ENCODE measurements at regions of chr6 and their contacts with region 1.

Region 1: DNA sequence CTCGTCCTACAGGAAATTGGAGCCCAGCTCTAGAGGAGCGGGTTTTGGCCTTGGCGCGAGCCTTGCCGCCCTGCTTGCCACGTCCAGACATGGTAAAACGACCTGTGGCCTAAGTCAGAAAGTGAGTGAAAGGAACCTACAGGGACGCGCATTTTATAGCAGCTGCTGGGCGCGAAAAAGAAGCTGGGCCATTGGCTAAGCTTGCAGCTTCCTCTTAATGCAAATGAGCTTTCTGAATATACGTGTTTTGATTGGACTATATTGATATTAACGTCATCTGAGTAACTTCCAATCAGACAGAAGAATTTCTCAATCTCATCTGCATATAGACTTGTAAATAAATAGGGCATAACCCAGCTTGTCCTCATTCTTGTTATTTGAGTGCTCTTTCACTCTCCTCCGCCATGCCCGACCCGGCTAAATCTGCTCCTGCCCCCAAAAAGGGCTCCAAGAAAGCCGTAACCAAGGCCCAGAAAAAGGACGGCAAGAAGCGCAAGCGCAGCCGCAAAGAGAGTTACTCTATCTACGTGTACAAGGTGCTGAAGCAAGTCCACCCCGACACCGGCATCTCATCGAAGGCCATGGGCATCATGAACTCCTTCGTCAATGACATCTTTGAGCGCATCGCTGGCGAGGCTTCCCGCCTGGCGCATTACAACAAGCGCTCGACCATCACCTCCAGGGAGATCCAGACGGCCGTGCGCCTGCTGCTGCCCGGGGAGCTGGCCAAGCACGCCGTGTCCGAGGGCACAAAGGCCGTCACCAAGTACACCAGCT is 18.9 kb downstream of the OR2B2 start:
- DNase-seq: peak; percentile 95
- H3K4me3 Mint-ChIP-seq: no peak overlapping the region
- H3K27ac Mint-ChIP-seq: no peak overlapping the region
- H3K4me1 Mint-ChIP-seq: peaks cover 32% of the 10 kb centered on the region
- H3K27me3 Mint-ChIP-seq: peaks cover 7% of the 10 kb centered on the region

Region 2: DNA sequence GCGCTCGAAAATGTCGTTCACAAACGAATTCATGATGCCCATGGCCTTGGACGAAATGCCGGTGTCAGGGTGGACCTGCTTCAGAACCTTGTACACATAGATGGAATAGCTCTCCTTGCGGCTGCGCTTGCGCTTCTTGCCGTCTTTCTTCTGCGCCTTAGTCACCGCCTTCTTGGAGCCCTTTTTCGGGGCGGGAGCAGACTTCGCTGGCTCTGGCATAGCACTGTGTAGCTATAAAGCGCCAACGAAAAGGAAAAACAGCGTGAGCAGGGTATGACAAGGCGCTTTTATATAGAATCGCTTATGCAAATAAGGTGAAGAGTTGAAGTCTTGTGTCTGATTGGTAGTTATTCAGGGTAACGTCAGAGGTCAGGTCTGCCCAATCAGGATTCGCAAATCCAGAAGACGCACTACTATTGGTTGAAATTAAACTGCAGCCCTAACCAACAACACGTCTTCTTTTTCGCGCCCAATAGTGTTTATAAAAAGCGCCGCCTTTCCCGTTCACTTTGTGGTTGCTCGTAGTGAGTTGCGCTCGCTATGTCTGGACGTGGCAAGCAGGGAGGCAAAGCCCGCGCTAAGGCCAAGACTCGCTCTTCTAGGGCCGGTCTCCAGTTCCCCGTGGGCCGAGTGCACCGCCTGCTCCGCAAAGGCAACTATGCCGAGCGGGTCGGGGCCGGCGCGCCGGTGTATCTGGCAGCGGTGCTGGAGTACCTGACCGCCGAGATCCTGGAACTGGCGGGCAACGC is 760.5 kb before region 1 on chr6:
- CTCF ChIA-PET with region 1: no interaction called
- POLR2A ChIA-PET with region 1: interaction called, 42 read pairs
- intact Hi-C with region 1: loop called (anchors 2 kb)
- DNase-seq: peak; percentile 95
- H3K4me3 Mint-ChIP-seq: no peak overlapping the region
- H3K27ac Mint-ChIP-seq: no peak overlapping the region
- H3K4me1 Mint-ChIP-seq: peaks cover 16% of the 10 kb centered on the region
- H3K27me3 Mint-ChIP-seq: peaks cover 2% of the 10 kb centered on the region

Region 3: GRCh38 chr6:27479319-27480182 is 413.7 kb before region 1 on chr6:
- CTCF ChIA-PET with region 1: no interaction called
- POLR2A ChIA-PET with region 1: no interaction called
- intact Hi-C with region 1: loop called (anchors 2 kb)
- DNase-seq: peak; percentile 89
- H3K4me3 Mint-ChIP-seq: no peak overlapping the region
- H3K27ac Mint-ChIP-seq: no peak overlapping the region
- H3K4me1 Mint-ChIP-seq: peaks cover 5% of the 10 kb centered on the region
- H3K27me3 Mint-ChIP-seq: no peaks in the 10 kb centered on the region

Region 4: GRCh38 chr6:27650620-27651370 is 242.5 kb before region 1 on chr6:
- CTCF ChIA-PET with region 1: no interaction called
- POLR2A ChIA-PET with region 1: no interaction called
- intact Hi-C with region 1: no loop called
- DNase-seq: peak; percentile 74
- H3K4me3 Mint-ChIP-seq: no peak overlapping the region
- H3K27ac Mint-ChIP-seq: no peak overlapping the region
- H3K4me1 Mint-ChIP-seq: peaks cover 5% of the 10 kb centered on the region
- H3K27me3 Mint-ChIP-seq: peaks cover 50% of the 10 kb centered on the region

Region 5: DNA sequence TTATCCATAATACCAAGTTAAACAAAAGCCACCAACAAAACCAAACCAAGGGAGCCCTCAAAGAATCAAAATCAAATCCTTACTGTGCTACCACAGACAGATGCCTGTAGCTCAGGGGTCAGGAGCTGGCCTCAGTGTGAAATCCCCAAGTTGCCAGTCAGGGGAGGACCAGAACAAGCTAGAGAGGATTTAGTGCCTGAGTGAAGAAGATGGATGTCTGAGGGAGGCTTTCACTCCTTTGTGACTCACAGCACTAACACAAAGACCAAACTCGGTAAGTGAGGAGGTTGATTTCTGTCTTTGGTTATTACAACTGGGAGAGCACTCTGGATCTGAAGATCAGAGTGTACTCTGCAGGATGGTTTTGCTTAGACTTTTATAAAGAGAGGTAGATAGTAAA is 230.5 kb before region 1 on chr6:
- CTCF ChIA-PET with region 1: no interaction called
- POLR2A ChIA-PET with region 1: no interaction called
- intact Hi-C with region 1: no loop called
- DNase-seq: no peak
- H3K4me3 Mint-ChIP-seq: no peak overlapping the region
- H3K27ac Mint-ChIP-seq: no peak overlapping the region
- H3K4me1 Mint-ChIP-seq: peaks cover 5% of the 10 kb centered on the region
- H3K27me3 Mint-ChIP-seq: peaks cover 44% of the 10 kb centered on the region

Region 6: GRCh38 chr6:27795697-27796494 is 97.4 kb before region 1 on chr6:
- CTCF ChIA-PET with region 1: interaction called, 64 read pairs
- POLR2A ChIA-PET with region 1: no interaction called
- intact Hi-C with region 1: no loop called
- DNase-seq: peak; percentile 39
- H3K4me3 Mint-ChIP-seq: no peak overlapping the region
- H3K27ac Mint-ChIP-seq: peak overlapping the region; percentile 67
- H3K4me1 Mint-ChIP-seq: peaks cover 22% of the 10 kb centered on the region
- H3K27me3 Mint-ChIP-seq: peaks cover 8% of the 10 kb centered on the region

Region 7: GRCh38 chr6:27864906-27865849 is 28.1 kb before region 1 on chr6:
- CTCF ChIA-PET with region 1: interaction called, 121 read pairs
- POLR2A ChIA-PET with region 1: interaction called, 507 read pairs
- intact Hi-C with region 1: loop called (anchors 1 kb)
- DNase-seq: peak; percentile 85
- H3K4me3 Mint-ChIP-seq: peak overlapping the region; percentile 96
- H3K27ac Mint-ChIP-seq: peak overlapping the region; percentile 100
- H3K4me1 Mint-ChIP-seq: peaks cover 38% of the 10 kb centered on the region
- H3K27me3 Mint-ChIP-seq: peaks cover 20% of the 10 kb centered on the region

Region 8: DNA sequence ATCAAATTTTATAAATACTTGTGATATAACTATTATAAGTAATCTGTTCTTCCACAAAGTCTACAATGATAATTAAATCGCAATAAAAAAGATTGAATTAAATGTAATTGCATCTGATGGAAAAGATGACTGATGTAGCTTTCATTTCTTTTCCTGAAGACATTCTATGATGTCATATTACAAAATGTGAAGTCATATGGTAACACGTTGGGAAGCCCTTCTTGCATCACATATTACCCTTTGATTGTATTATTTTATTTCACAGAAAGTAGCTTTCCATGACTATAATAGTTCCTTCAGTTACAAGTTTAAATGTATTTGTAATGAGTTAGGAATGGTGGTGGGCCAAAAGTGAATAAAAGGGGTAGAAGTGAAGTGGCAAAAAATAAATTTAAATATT is 38.0 kb after region 1 on chr6:
- CTCF ChIA-PET with region 1: no interaction called
- POLR2A ChIA-PET with region 1: no interaction called
- intact Hi-C with region 1: no loop called
- DNase-seq: no peak
- H3K4me3 Mint-ChIP-seq: no peak overlapping the region
- H3K27ac Mint-ChIP-seq: no peak overlapping the region
- H3K4me1 Mint-ChIP-seq: no peaks in the 10 kb centered on the region
- H3K27me3 Mint-ChIP-seq: peaks cover 12% of the 10 kb centered on the region

Region 9: DNA sequence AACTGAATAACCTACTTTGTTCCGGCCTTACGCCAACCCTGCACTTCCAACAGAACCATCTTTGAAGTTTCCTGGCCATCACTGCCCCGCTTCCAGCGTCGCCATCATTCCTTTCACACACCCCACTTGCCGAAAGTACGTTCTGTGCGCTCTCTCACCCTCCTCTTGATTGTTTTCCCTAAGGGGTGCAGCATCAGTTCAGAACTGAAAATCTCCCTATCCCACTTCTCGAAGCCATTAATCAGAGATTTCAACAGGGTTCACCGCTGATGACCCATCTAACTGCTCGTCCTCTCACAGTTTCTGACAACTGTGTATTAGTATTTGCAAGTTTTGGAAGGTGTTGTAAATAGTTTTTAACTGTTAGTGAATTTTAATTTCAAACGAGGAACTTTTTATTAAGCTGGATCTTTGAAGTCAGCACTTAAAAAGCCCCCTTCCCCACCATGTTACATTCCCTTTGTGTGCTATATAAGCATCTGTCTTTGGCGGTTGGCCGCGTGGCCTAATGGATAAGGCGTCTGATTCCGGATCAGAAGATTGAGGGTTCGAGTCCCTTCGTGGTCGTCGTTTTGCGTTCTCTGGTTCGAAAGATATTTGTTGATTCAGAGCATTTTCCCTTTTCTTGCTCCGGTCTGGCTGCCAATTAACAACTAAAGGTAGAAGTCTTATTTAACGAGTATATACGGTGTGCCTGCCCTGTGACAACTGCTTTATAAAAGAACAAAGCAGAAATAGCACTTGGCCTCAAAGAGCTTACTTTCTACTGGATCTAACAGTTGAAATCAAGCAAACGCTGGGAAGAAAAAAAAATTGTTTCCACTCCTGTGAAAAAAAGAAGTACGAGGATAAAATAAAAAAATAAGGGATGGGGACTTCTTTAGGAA is 987.9 kb after region 1 on chr6:
- CTCF ChIA-PET with region 1: no interaction called
- POLR2A ChIA-PET with region 1: interaction called, 3 read pairs
- intact Hi-C with region 1: loop called (anchors 10 kb)
- DNase-seq: peak; percentile 78
- H3K4me3 Mint-ChIP-seq: peak overlapping the region; percentile 65
- H3K27ac Mint-ChIP-seq: peak overlapping the region; percentile 24
- H3K4me1 Mint-ChIP-seq: peaks cover 28% of the 10 kb centered on the region
- H3K27me3 Mint-ChIP-seq: peaks cover 14% of the 10 kb centered on the region

Region 10: GRCh38 chr6:29685718-29686326 is 1792.6 kb after region 1 on chr6:
- CTCF ChIA-PET with region 1: no interaction called
- POLR2A ChIA-PET with region 1: no interaction called
- intact Hi-C with region 1: no loop called
- DNase-seq: no peak
- H3K4me3 Mint-ChIP-seq: no peak overlapping the region
- H3K27ac Mint-ChIP-seq: no peak overlapping the region
- H3K4me1 Mint-ChIP-seq: peaks cover 3% of the 10 kb centered on the region
- H3K27me3 Mint-ChIP-seq: peaks cover 4% of the 10 kb centered on the region

Measured in activated CD4-positive, alpha-beta memory T cell treated with anti-CD3 and anti-CD28 coated beads for 36 hours (primary cell).